SK-N-SH (cell line): ENCODE measurements at regions of chr1 and their contacts with region 1.

Region 1: DNA sequence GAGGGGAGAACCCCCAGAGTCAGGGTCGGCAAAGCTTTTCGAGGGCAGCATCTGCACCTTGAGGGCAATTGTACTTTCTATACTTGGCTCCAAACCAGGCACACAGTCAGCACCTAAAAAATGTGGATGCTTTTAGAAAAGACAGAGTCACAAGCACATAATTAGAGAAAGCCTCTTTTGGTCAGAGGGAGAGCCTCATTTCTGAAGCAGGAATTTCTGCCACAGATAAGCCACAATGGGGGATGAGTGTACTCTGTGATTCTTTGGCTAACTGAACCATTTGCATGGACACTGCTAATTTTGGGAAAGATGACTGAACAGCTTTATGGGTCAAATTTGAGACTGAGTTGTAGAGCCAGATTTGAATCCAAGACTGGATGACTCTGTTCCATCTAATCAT is 635.7 kb downstream of the KIF26B start:
- DNase-seq: no peak
- H3K4me3 ChIP-seq: no peak overlapping the region
- H3K27ac ChIP-seq: peak overlapping the region; percentile 78 to 100
- H3K4me1 ChIP-seq: peaks cover 20 to 62% of the 10 kb centered on the region in 2 experiments
- H3K27me3 ChIP-seq: no peaks in the 10 kb centered on the region
- CTCF ChIP-seq: no peak
- EP300 ChIP-seq: peak in 1 of 2 experiments; percentile 40; a peak in 1 of 4 replicates
- RAD21 ChIP-seq: no peak

Region 2: GRCh38 chr1:245605480-245606161 is 184.8 kb before region 1 on chr1:
- CTCF ChIA-PET with region 1: interaction called, 4 read pairs
- POLR2A ChIA-PET with region 1: interaction called, 22 read pairs
- DNase-seq: peak; percentile 91
- H3K4me3 ChIP-seq: no peak overlapping the region; a peak in 2 of 4 replicates
- H3K27ac ChIP-seq: peak overlapping the region; percentile 71 to 100
- H3K4me1 ChIP-seq: peaks cover 12 to 78% of the 10 kb centered on the region in 2 experiments; a peak in 3 of 4 replicates
- H3K27me3 ChIP-seq: no peaks in the 10 kb centered on the region
- CTCF ChIP-seq: no peak
- EP300 ChIP-seq: peak; percentile 88 to 89
- RAD21 ChIP-seq: peak; percentile 49

Region 3: DNA sequence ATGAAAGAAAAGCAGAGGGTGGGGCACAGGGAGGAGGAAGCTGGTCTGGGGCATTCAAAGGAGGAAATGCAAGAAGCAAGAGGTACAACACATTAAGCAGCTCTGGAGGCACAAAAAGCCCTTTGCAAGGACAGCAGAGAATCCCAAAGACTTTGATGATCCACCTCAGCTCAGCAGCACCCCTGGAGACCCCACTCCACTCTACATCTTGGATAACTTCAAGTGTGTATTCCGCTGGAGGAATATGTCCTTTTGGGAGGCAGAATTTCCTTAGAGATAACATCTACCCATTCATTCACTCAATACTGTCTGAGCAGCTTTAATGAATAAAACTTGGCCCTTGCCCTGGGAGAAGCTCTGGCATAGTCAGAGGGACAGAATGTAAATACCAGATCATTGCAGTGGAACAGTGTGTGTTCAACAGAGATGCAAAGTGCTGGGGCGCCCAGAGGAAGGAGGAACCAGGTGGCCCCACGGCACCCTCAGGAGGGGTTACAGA is 35.9 kb before region 1 on chr1:
- CTCF ChIA-PET with region 1: interaction called, 8 read pairs
- POLR2A ChIA-PET with region 1: interaction called, 19 read pairs
- DNase-seq: no peak
- H3K4me3 ChIP-seq: no peak overlapping the region
- H3K27ac ChIP-seq: peak overlapping the region; percentile 25 to 97; a peak in 3 of 4 replicates
- H3K4me1 ChIP-seq: peaks cover 7 to 43% of the 10 kb centered on the region in 2 experiments; a peak in 3 of 4 replicates
- H3K27me3 ChIP-seq: no peaks in the 10 kb centered on the region
- CTCF ChIP-seq: no peak
- EP300 ChIP-seq: peak in 1 of 2 experiments; percentile 60; a peak in 2 of 4 replicates
- RAD21 ChIP-seq: no peak

Region 4: DNA sequence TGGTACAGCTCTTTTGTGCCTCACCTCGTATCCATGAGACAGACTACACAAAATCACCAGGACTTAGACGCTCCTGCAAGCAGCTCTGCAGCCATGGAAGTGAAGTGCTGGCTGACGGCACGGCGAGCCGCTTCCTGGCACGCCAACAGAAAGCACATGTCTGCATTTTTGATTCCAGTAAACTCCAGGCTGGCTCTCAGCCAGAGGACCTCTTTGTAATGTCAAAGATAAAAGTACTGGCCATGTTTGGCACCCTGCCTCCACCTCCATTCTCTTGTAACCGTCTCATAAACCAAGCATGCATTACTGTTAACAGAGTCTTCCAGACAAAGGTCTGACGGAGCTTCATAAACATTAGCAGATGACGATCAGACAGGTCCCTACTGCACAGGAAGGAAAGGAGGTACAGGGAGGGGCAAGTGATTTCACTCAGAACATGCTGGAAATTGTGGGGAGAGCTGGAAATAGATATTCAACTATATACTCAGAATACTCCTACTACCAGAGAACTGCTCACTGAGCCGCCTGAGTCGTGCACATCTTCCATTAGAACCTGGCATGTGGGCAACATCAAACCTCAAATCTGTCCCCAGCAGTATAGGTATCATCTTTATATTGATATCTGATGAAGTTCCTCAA is 84.6 kb after region 1 on chr1:
- CTCF ChIA-PET with region 1: interaction called, 4 read pairs
- POLR2A ChIA-PET with region 1: interaction called, 11 read pairs
- DNase-seq: peak; percentile 82
- H3K4me3 ChIP-seq: no peak overlapping the region
- H3K27ac ChIP-seq: peak overlapping the region; percentile 96 to 100
- H3K4me1 ChIP-seq: peaks cover 29 to 80% of the 10 kb centered on the region in 2 experiments
- H3K27me3 ChIP-seq: no peaks in the 10 kb centered on the region
- CTCF ChIP-seq: no peak
- EP300 ChIP-seq: peak; percentile 99 to 100
- RAD21 ChIP-seq: peak; percentile 54